GM12878 (cell line): ENCODE measurements at regions of chr17 and their contacts with region 1.

Region 1: DNA sequence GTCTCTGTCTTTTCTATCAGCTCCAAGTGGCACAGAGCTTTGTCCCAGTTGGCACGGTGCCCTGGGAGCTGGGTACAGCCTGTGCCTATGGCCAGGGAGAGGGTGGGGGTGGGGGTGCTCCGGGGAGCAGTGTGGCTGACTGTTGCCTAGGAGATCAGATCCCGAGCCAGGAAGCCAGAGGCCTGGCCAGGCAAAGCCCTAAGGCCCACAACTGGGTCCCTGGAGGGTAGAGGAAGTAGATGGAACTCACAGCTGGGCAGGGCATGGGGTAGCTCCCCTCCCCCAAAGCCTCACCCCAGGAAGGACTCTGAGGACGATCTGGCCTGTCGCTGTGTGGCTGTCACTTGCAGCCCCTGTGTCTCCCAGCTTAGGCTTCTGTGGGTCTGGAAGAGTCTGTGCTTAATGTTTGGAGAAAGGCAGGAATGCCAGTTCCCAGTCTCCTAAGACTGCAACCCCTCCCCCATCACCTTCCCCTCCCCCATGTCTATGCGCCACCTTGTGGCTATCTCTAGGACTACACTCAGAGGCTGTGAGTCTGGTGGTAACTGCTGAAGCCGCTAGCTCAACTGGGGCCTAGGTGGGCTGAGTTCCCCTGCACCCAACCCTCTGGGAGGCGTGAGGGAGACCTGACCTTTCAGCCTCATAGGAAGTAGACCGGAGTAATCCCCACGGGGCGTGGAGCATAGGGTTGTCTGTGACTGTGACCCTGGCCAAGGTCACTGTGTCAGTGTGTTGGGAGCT is 12.6 kb downstream of the THRA start:
- DNase-seq: no peak
- ATAC-seq: peak; percentile 89
- H3K4me3 ChIP-seq: no peak overlapping the region
- H3K27ac ChIP-seq: no peak overlapping the region
- H3K4me1 ChIP-seq: peaks cover 6% of the 10 kb centered on the region
- H3K27me3 ChIP-seq: no peaks in the 10 kb centered on the region
- CTCF ChIP-seq: peak; percentile 72 to 91 (median 81)
- EP300 ChIP-seq: no peak
- POLR2A ChIP-seq: no peak
- RAD21 ChIP-seq: peak; percentile 57

Region 2: GRCh38 chr17:39852239-39852638 is 223.1 kb before region 1 on chr17:
- CTCF ChIA-PET with region 1: no interaction called
- POLR2A ChIA-PET with region 1: no interaction called
- RAD21 ChIA-PET with region 1: no interaction called
- SMC1A ChIA-PET with region 1: no interaction called
- in situ Hi-C with region 1: no loop called
- intact Hi-C with region 1: no loop called
- DNase-seq: no peak
- ATAC-seq: peak; percentile 66
- H3K4me3 ChIP-seq: peak overlapping the region; percentile 54
- H3K27ac ChIP-seq: peak overlapping the region; percentile 51
- H3K4me1 ChIP-seq: peaks cover 47% of the 10 kb centered on the region
- H3K27me3 ChIP-seq: no peaks in the 10 kb centered on the region
- CTCF ChIP-seq: no peak
- EP300 ChIP-seq: no peak
- POLR2A ChIP-seq: no peak
- RAD21 ChIP-seq: no peak

Region 3: DNA sequence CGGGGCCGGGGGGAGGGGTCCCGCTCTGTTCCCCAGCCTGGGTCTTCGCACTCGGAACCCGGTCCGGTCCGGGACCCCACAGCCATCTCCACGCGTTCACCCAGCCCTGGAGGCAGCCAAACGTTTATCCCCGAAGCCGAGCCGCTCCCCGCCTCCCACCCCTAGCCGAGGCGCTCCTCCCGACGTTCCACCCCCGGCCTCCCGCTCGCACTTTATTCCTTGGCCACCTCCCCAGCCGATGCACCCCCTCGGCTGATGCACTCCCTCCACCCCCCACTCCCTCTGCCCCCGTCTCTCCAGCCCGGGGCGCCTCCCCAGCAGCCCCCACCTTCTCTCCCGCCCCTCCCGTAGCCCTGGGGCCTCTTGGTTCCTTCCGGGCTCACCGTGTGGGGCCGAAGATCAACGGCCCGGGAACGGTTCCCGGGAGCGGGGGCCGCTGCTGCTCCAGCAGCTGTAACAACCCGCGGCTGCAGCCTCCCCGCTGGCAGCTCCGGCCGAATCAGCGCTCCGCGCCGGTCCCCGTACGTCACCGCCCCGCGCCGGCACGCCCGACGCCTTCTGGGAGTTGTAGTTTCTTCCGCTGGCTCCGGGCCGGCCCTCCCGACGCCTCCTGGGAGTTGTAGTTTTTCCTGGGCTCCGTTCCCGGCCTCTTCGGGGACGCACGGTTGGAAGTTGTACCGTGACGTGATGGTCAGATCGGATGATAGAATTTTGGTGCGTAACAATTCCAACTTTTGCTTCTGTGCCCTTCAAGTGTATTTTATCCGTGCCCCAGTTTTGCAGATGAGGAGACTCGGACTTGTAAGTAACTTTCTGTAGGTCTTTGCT is 148.1 kb before region 1 on chr17 and contains the starts of genes LRRC3C and ORMDL3:
- CTCF ChIA-PET with region 1: no interaction called
- POLR2A ChIA-PET with region 1: no interaction called
- RAD21 ChIA-PET with region 1: no interaction called
- SMC1A ChIA-PET with region 1: no interaction called
- in situ Hi-C with region 1: no loop called
- intact Hi-C with region 1: no loop called
- DNase-seq: no peak
- ATAC-seq: peak; percentile 76
- H3K4me3 ChIP-seq: peak within 1 kb of the TSS; percentile 87
- H3K27ac ChIP-seq: peak within 1 kb of the TSS; percentile 82
- H3K4me1 ChIP-seq: peaks cover 22% of the 10 kb centered on the region
- H3K27me3 ChIP-seq: no peaks in the 10 kb centered on the region
- CTCF ChIP-seq: no peak
- EP300 ChIP-seq: 0 out of 4 replicates have a peak, but pooled peaks of 1 of the 2 experiments have one; percentile 10
- POLR2A ChIP-seq: peak; percentile 84
- RAD21 ChIP-seq: no peak
- polyA plus RNA-seq, gene LRRC3C: not detected
- polyA plus RNA-seq, gene ORMDL3: 8.8 to 21.1 TPM

Region 4: DNA sequence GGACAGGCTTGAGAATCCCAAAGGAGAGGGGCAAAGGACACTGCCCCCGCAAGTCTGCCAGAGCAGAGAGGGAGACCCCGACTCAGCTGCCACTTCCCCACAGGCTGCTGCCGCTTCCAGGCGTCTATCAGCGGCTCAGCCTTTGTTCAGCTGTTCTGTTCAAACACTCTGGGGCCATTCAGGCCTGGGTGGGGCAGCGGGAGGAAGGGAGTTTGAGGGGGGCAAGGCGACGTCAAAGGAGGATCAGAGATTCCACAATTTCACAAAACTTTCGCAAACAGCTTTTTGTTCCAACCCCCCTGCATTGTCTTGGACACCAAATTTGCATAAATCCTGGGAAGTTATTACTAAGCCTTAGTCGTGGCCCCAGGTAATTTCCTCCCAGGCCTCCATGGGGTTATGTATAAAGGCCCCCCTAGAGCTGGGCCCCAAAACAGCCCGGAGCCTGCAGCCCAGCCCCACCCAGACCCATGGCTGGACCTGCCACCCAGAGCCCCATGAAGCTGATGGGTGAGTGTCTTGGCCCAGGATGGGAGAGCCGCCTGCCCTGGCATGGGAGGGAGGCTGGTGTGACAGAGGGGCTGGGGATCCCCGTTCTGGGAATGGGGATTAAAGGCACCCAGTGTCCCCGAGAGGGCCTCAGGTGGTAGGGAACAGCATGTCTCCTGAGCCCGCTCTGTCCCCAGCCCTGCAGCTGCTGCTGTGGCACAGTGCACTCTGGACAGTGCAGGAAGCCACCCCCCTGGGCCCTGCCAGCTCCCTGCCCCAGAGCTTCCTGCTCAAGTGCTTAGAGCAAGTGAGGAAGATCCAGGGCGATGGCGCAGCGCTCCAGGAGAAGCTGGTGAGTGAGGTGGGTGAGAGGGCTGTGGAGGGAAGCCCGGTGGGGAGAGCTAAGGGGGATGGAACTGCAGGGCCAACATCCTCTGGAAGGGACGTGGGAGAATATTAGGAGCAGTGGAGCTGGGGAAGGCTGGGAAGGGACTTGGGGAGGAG is 60.1 kb before region 1 on chr17 and contains the start of gene CSF3:
- CTCF ChIA-PET with region 1: interaction called, 33 read pairs
- POLR2A ChIA-PET with region 1: no interaction called
- RAD21 ChIA-PET with region 1: interaction called, 8 read pairs
- SMC1A ChIA-PET with region 1: interaction called, 8 read pairs
- in situ Hi-C with region 1: no loop called
- intact Hi-C with region 1: no loop called
- DNase-seq: no peak
- ATAC-seq: 0 out of 3 replicates have a peak, but pooled peaks have one; percentile 16
- H3K4me3 ChIP-seq: no peak within 1 kb of the TSS
- H3K27ac ChIP-seq: no peak within 1 kb of the TSS
- H3K4me1 ChIP-seq: peaks cover 8% of the 10 kb centered on the region
- H3K27me3 ChIP-seq: no peaks in the 10 kb centered on the region
- CTCF ChIP-seq: no peak
- EP300 ChIP-seq: no peak
- POLR2A ChIP-seq: no peak
- RAD21 ChIP-seq: no peak
- polyA plus RNA-seq, gene CSF3: 0.09 TPM in 1 of 2 experiments, not detected in the other

Region 5: DNA sequence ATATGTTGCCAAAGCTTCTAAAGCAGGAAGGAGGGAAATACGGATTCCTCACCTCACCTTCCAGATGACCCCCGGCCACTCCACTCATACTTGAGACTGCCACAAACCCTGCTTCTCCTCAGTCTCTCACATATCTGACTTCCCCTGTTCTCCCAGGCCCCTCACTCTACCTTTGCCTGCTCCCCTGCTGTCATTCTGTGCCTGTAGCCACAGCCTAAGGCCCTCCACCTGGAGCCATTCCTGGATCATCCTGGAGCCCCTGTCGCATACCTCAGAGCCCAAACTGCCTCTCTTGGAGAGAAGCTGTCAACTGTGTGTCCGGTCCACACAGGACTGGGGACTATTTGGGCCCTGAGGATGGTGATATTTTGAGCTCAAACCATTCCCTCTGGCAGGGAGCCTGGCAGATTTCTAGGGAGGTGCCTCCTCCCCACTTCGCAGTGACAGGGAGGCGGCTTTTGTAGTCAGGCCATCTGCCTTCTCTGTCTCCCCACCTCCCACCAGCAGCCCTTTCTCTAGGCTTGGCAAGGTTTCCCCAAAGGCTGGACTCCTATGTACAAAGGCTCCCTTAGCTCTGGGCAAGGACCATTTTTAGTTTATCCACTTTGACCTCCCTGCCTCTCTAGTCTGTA is 18.9 kb before region 1 on chr17:
- CTCF ChIA-PET with region 1: interaction called, 142 read pairs
- POLR2A ChIA-PET with region 1: interaction called, 4 read pairs
- RAD21 ChIA-PET with region 1: interaction called, 7 read pairs
- SMC1A ChIA-PET with region 1: interaction called, 18 read pairs
- in situ Hi-C with region 1: no loop called
- intact Hi-C with region 1: no loop called
- DNase-seq: no peak
- ATAC-seq: no peak
- H3K4me3 ChIP-seq: no peak overlapping the region
- H3K27ac ChIP-seq: no peak overlapping the region
- H3K4me1 ChIP-seq: no peaks in the 10 kb centered on the region
- H3K27me3 ChIP-seq: no peaks in the 10 kb centered on the region; a peak in 2 of 4 replicates
- CTCF ChIP-seq: no peak
- EP300 ChIP-seq: no peak
- POLR2A ChIP-seq: no peak
- RAD21 ChIP-seq: no peak

Region 6: DNA sequence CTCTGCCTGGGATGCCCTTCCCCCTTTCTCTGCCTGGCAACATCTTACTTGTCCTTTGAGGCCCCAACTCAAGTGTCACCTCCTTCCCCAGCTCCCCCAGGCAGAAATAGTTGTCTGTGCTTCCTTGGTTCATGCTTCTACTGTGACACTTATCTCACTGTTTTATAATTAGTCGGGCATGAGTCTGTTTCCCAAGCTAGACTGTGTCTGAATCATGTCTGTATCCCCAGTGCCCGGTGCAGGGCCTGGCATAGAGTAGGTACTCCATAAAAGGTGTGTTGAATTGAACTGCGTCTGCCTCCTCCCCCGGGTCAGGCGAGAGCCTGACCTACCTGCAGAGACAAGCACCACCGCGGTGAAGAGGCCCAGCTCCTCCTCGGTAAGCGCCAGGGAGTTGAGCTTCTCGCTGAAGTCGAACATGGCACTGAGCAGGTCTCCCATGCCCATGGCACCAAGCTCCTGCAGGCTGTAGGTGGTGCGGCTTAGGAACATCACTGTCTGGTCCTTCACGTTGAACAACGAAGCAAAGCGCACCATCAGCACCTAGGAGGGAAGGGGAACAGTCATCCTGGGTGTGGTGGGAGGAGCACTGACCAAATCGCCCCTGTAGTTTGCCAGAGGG is 18.3 kb after region 1 on chr17:
- CTCF ChIA-PET with region 1: interaction called, 42 read pairs
- POLR2A ChIA-PET with region 1: interaction called, 3 read pairs
- RAD21 ChIA-PET with region 1: interaction called, 10 read pairs
- SMC1A ChIA-PET with region 1: interaction called, 4 read pairs
- in situ Hi-C with region 1: no loop called
- intact Hi-C with region 1: no loop called
- DNase-seq: no peak
- ATAC-seq: no peak
- H3K4me3 ChIP-seq: no peak overlapping the region
- H3K27ac ChIP-seq: no peak overlapping the region
- H3K4me1 ChIP-seq: peaks cover 29% of the 10 kb centered on the region
- H3K27me3 ChIP-seq: no peaks in the 10 kb centered on the region
- CTCF ChIP-seq: no peak
- EP300 ChIP-seq: no peak
- POLR2A ChIP-seq: no peak
- RAD21 ChIP-seq: no peak

Region 7: DNA sequence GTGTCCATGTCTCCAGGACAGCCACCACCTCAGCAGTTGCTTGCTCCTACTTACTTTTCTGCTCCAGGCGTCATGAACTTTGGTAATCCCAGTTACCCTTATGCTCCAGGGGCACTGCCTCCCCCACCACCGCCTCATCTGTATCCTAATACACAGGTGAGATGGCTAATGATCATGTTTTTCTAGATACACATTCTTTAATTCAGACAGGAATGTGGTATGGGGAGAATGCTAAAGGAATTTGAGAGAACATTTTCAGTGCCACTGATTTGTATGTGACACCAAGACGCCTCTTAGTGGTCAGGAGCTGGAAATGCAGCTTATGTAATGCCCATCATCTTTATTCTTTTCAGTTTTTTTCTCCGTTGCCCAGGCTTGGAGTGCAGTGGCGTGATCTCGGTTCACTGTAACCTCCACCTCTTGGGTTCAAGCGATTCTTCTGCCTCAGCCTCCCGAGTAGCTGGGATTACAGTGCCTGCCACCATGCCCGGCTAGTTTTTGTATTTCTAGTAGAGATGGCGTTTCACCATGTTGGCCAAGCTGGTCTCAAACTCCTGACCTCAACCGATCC is 93.0 kb after region 1 on chr17:
- CTCF ChIA-PET with region 1: interaction called, 13 read pairs
- POLR2A ChIA-PET with region 1: no interaction called
- RAD21 ChIA-PET with region 1: interaction called, 5 read pairs
- SMC1A ChIA-PET with region 1: interaction called, 9 read pairs
- in situ Hi-C with region 1: no loop called
- intact Hi-C with region 1: no loop called
- DNase-seq: peak; percentile 15
- ATAC-seq: peak; percentile 83
- H3K4me3 ChIP-seq: no peak overlapping the region
- H3K27ac ChIP-seq: no peak overlapping the region
- H3K4me1 ChIP-seq: no peaks in the 10 kb centered on the region
- H3K27me3 ChIP-seq: no peaks in the 10 kb centered on the region
- CTCF ChIP-seq: peak; percentile 69 to 78 (median 69)
- EP300 ChIP-seq: no peak
- POLR2A ChIP-seq: no peak
- RAD21 ChIP-seq: peak; percentile 80